A673 (cell line): ENCODE measurements at regions of chr10 and their contacts with region 1.

Region 1: GRCh38 chr10:74110120-74110519 is 40.5 kb downstream of the AP3M1 start:
- DNase-seq: no peak
- H3K4me3 ChIP-seq: no peak overlapping the region
- H3K27ac ChIP-seq: no peak overlapping the region
- H3K4me1 ChIP-seq: no peaks in the 10 kb centered on the region
- H3K27me3 ChIP-seq: no peaks in the 10 kb centered on the region
- CTCF ChIP-seq: no peak

Region 2: GRCh38 chr10:74120911-74121310 is 10.8 kb after region 1 on chr10:
- CTCF ChIA-PET with region 1: no interaction called
- POLR2A ChIA-PET with region 1: no interaction called
- intact Hi-C with region 1: no loop called
- DNase-seq: no peak
- H3K4me3 ChIP-seq: no peak overlapping the region
- H3K27ac ChIP-seq: no peak overlapping the region
- H3K4me1 ChIP-seq: peaks cover 10% of the 10 kb centered on the region
- H3K27me3 ChIP-seq: no peaks in the 10 kb centered on the region
- CTCF ChIP-seq: no peak

Region 3: DNA sequence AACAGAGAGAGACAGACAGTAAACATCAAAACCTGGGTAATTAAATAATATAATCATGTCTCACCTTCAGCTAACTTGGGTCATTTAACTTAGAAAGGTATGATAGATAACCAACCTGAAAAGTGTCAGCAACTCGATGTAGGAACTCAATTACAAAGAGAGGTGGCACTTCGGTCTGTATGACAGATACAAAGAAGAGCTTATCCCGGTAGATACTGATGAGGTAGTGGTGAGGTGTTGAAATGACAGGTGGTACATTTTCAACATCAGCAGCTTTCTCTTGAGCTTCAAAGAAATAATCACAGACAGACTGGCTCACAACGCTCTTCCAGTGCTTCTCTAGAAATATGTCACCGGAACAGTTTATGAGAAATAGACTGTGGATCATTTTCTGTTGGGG is 27.9 kb after region 1 on chr10:
- CTCF ChIA-PET with region 1: interaction called, 12 read pairs
- POLR2A ChIA-PET with region 1: no interaction called
- intact Hi-C with region 1: no loop called
- DNase-seq: no peak
- H3K4me3 ChIP-seq: no peak overlapping the region
- H3K27ac ChIP-seq: no peak overlapping the region
- H3K4me1 ChIP-seq: no peaks in the 10 kb centered on the region
- H3K27me3 ChIP-seq: no peaks in the 10 kb centered on the region
- CTCF ChIP-seq: no peak